CD8-positive, alpha-beta T cell (primary cell): ENCODE measurements at regions of chr5 and their contacts with region 1.

Region 1: GRCh38 chr5:141320225-141321169 is at the start of gene TAF7:
- DNase-seq: peak; percentile 86 to 96 (median 91)
- ATAC-seq: peak; percentile 88
- H3K4me3 ChIP-seq: peak within 1 kb of the TSS; percentile 67 to 92
- H3K4me3 Mint-ChIP-seq: peak within 1 kb of the TSS; percentile 97
- H3K27ac ChIP-seq: peak within 1 kb of the TSS; percentile 90 to 99
- H3K27ac Mint-ChIP-seq: peak within 1 kb of the TSS; percentile 99
- H3K4me1 ChIP-seq: peaks cover 12% of the 10 kb centered on the region
- H3K4me1 Mint-ChIP-seq: peaks cover 28% of the 10 kb centered on the region
- H3K27me3 ChIP-seq: peaks cover 0 to 2% of the 10 kb centered on the region in 2 experiments
- H3K27me3 Mint-ChIP-seq: peaks cover 1% of the 10 kb centered on the region
- CTCF ChIP-seq: peak; percentile 94
- total RNA-seq, gene TAF7: 93.7 to 97.3 TPM

Region 2: GRCh38 chr5:140564196-140565023 is 756.1 kb before region 1 on chr5 and contains the starts of genes APBB3 and SLC35A4:
- CTCF ChIA-PET with region 1: no interaction called
- POLR2A ChIA-PET with region 1: no interaction called
- intact Hi-C with region 1: loop called in 1 of 2 experiments (anchors 5 kb)
- DNase-seq: peak; percentile 92 to 100 (median 95)
- ATAC-seq: peak; percentile 88
- H3K4me3 ChIP-seq: peak within 1 kb of the TSS; percentile 52 to 79
- H3K4me3 Mint-ChIP-seq: peak within 1 kb of the TSS; percentile 88
- H3K27ac ChIP-seq: peak within 1 kb of the TSS; percentile 73 to 92
- H3K27ac Mint-ChIP-seq: peak within 1 kb of the TSS; percentile 94
- H3K4me1 ChIP-seq: peaks cover 30% of the 10 kb centered on the region
- H3K4me1 Mint-ChIP-seq: peaks cover 62% of the 10 kb centered on the region
- H3K27me3 ChIP-seq: no peaks in the 10 kb centered on the region
- H3K27me3 Mint-ChIP-seq: no peaks in the 10 kb centered on the region
- CTCF ChIP-seq: no peak
- total RNA-seq, gene APBB3: 51.0 to 51.7 TPM
- total RNA-seq, gene SLC35A4: 14.8 to 19.4 TPM

Region 3: DNA sequence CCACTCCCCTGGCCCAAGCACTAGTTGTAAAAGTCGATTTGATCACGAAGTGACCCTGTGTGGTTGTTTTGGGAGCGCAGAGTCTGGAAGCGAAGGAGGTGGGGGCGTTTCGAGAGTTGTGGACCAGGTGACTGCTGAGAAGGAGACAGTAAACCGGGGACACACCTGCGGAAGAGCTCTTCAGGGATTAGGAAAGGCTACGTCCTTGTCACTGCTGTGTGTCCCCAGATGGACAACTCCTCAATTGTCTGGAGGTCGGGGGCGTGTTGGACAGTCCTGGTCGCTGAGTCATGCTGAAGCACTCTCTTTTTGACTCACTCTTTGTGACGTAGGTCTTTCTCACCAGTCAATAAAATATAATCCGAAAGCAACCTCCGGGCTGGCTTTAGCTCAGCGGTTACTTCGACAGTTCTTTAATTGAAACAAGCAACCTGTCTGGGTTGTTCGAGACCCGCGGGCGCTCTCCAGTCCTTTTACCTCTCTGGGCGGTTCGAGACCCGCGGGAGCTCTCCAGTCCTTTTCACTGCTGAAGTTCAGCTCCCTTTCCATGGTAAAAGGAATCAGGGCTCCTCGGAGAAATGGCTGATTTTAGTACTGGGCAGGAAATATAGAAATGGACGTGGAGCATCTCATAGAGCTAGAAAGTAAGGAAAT is 609.5 kb before region 1 on chr5:
- CTCF ChIA-PET with region 1: no interaction called
- POLR2A ChIA-PET with region 1: interaction called, 3 read pairs
- intact Hi-C with region 1: loop called in 1 of 2 experiments (anchors 5 kb)
- DNase-seq: peak; percentile 66 to 95 (median 85)
- ATAC-seq: peak; percentile 83
- H3K4me3 ChIP-seq: peak overlapping the region; percentile 58 to 74
- H3K4me3 Mint-ChIP-seq: peak overlapping the region; percentile 99
- H3K27ac ChIP-seq: peak overlapping the region; percentile 72 to 86
- H3K27ac Mint-ChIP-seq: peak overlapping the region; percentile 99
- H3K4me1 ChIP-seq: no peaks in the 10 kb centered on the region
- H3K4me1 Mint-ChIP-seq: peaks cover 16% of the 10 kb centered on the region
- H3K27me3 ChIP-seq: no peaks in the 10 kb centered on the region
- H3K27me3 Mint-ChIP-seq: no peaks in the 10 kb centered on the region
- CTCF ChIP-seq: no peak

Region 4: GRCh38 chr5:141077826-141078225 is 242.7 kb before region 1 on chr5:
- CTCF ChIA-PET with region 1: no interaction called
- POLR2A ChIA-PET with region 1: no interaction called
- intact Hi-C with region 1: no loop called
- DNase-seq: no peak
- ATAC-seq: no peak
- H3K4me3 ChIP-seq: no peak overlapping the region
- H3K4me3 Mint-ChIP-seq: no peak overlapping the region
- H3K27ac ChIP-seq: no peak overlapping the region
- H3K27ac Mint-ChIP-seq: no peak overlapping the region
- H3K4me1 ChIP-seq: no peaks in the 10 kb centered on the region
- H3K4me1 Mint-ChIP-seq: no peaks in the 10 kb centered on the region
- H3K27me3 ChIP-seq: no peaks in the 10 kb centered on the region
- H3K27me3 Mint-ChIP-seq: peaks cover 20% of the 10 kb centered on the region
- CTCF ChIP-seq: no peak

Region 5: GRCh38 chr5:141392429-141393198 is 72.1 kb after region 1 on chr5 and contains the start of gene PCDHGA8:
- CTCF ChIA-PET with region 1: no interaction called
- POLR2A ChIA-PET with region 1: no interaction called
- intact Hi-C with region 1: no loop called
- DNase-seq: no peak
- ATAC-seq: no peak
- H3K4me3 ChIP-seq: no peak within 1 kb of the TSS
- H3K4me3 Mint-ChIP-seq: no peak within 1 kb of the TSS
- H3K27ac ChIP-seq: no peak within 1 kb of the TSS
- H3K27ac Mint-ChIP-seq: no peak within 1 kb of the TSS
- H3K4me1 ChIP-seq: no peaks in the 10 kb centered on the region
- H3K4me1 Mint-ChIP-seq: no peaks in the 10 kb centered on the region
- H3K27me3 ChIP-seq: peaks cover 24 to 36% of the 10 kb centered on the region in 2 experiments
- H3K27me3 Mint-ChIP-seq: peaks cover 64% of the 10 kb centered on the region
- CTCF ChIP-seq: no peak
- total RNA-seq, gene PCDHGA8: not detected

Region 6: DNA sequence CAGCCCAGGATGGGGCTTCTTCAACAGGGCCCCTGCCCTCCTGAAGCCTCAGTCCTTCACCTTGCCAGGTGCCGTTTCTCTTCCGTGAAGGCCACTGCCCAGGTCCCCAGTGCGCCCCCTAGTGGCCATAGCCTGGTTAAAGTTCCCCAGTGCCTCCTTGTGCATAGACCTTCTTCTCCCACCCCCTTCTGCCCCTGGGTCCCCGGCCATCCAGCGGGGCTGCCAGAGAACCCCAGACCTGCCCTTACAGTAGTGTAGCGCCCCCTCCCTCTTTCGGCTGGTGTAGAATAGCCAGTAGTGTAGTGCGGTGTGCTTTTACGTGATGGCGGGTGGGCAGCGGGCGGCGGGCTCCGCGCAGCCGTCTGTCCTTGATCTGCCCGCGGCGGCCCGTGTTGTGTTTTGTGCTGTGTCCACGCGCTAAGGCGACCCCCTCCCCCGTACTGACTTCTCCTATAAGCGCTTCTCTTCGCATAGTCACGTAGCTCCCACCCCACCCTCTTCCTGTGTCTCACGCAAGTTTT is 192.0 kb after region 1 on chr5:
- CTCF ChIA-PET with region 1: interaction called, 12 read pairs
- POLR2A ChIA-PET with region 1: interaction called, 12 read pairs
- intact Hi-C with region 1: no loop called
- DNase-seq: peak; percentile 68 to 91 (median 82)
- ATAC-seq: peak; percentile 51
- H3K4me3 ChIP-seq: peak overlapping the region; percentile 50 to 54
- H3K4me3 Mint-ChIP-seq: peak overlapping the region; percentile 87
- H3K27ac ChIP-seq: no peak overlapping the region
- H3K27ac Mint-ChIP-seq: no peak overlapping the region
- H3K4me1 ChIP-seq: peaks cover 21% of the 10 kb centered on the region
- H3K4me1 Mint-ChIP-seq: peaks cover 36% of the 10 kb centered on the region
- H3K27me3 ChIP-seq: no peaks in the 10 kb centered on the region
- H3K27me3 Mint-ChIP-seq: no peaks in the 10 kb centered on the region
- CTCF ChIP-seq: peak; percentile 83

Region 7: GRCh38 chr5:141557681-141558136 is 237.2 kb after region 1 on chr5:
- CTCF ChIA-PET with region 1: interaction called, 10 read pairs
- POLR2A ChIA-PET with region 1: interaction called, 4 read pairs
- intact Hi-C with region 1: no loop called
- DNase-seq: peak; percentile 53 to 86 (median 76)
- ATAC-seq: peak; percentile 83
- H3K4me3 ChIP-seq: no peak overlapping the region
- H3K4me3 Mint-ChIP-seq: no peak overlapping the region
- H3K27ac ChIP-seq: peak overlapping the region in 1 of 2 experiments; percentile 55
- H3K27ac Mint-ChIP-seq: peak overlapping the region; percentile 85
- H3K4me1 ChIP-seq: no peaks in the 10 kb centered on the region
- H3K4me1 Mint-ChIP-seq: peaks cover 28% of the 10 kb centered on the region
- H3K27me3 ChIP-seq: no peaks in the 10 kb centered on the region
- H3K27me3 Mint-ChIP-seq: no peaks in the 10 kb centered on the region
- CTCF ChIP-seq: peak; percentile 73

Region 8: DNA sequence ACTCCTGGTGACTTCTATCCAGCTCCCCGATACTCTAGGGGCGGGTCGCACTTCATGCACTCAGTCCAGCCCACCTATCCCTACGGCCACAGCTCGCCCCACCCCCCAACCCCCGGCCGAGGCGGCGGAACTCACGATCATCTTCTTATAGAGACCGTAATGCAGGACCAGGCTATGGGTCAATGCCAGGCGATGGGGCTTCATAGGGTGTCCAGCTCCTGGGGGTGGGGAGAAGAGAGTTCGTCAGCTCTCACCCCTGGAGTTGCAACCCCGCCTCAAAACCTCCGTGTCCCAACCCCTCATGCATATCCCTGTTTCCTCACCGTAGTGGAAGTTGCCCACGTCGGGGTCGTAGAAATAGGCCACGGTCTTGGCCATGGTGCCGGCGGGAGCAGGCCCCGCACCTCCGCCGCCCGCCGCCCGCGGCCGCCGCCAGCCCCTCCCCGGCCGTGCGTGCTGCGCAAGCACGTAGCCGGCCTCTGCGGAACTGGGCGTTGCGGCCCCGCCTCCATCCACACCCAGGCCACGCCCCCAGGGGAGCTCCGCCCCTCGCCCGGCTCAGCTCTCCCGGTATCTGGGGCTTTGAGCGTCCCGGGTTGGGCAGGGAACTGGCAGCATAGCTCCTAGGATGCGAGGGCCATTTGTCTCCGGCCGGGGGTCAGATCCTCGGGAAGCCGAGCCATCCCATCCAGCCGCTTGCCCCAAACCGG is 316.1 kb after region 1 on chr5 and contains the starts of genes HDAC3 and RELL2:
- CTCF ChIA-PET with region 1: interaction called, 3 read pairs
- POLR2A ChIA-PET with region 1: interaction called, 11 read pairs
- intact Hi-C with region 1: loop called (anchors 1 kb)
- DNase-seq: peak; percentile 88 to 97 (median 94)
- ATAC-seq: peak; percentile 89
- H3K4me3 ChIP-seq: peak within 1 kb of the TSS; percentile 98 to 99
- H3K4me3 Mint-ChIP-seq: peak within 1 kb of the TSS; percentile 92
- H3K27ac ChIP-seq: peak within 1 kb of the TSS; percentile 78 to 81
- H3K27ac Mint-ChIP-seq: peak within 1 kb of the TSS; percentile 89
- H3K4me1 ChIP-seq: peaks cover 28% of the 10 kb centered on the region
- H3K4me1 Mint-ChIP-seq: peaks cover 50% of the 10 kb centered on the region
- H3K27me3 ChIP-seq: no peaks in the 10 kb centered on the region
- H3K27me3 Mint-ChIP-seq: no peaks in the 10 kb centered on the region
- CTCF ChIP-seq: no peak
- total RNA-seq, gene HDAC3: 48.9 to 54.8 TPM
- total RNA-seq, gene RELL2: 9.5 to 9.8 TPM